ENCODE measurements at regions of chr6 and their contacts with region 1.

Region 1: DNA sequence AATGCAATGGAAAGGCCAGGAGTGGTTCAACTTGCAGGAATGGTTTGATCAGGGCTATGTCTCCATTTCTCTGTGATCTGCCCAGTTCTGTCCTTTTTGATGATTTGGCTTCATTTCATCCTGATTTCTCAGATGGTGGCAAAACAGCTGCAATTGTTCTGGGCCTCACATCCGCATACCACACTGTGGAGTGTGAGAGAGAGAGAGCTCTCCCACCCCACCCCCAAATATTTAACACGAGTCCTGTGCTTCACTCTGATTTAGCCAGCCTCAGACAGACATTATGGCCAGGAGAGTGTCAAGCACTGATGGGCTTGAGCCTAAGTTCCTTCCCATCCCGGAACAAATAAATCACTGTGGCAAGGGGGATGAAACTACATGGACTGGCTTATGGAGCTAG is 284.6 kb downstream of the CDC5L start:
- DNase-seq: no peak
- ATAC-seq: no peak
- H3K4me3 ChIP-seq: no peak overlapping the region
- H3K4me3 Mint-ChIP-seq: no peak overlapping the region
- H3K27ac ChIP-seq: no peak overlapping the region
- H3K27ac Mint-ChIP-seq: no peak overlapping the region
- H3K4me1 ChIP-seq: no peaks in the 10 kb centered on the region
- H3K4me1 Mint-ChIP-seq: peaks cover 0 to 6% (median 0%) of the 10 kb centered on the region in 3 donors
- H3K27me3 ChIP-seq: peaks cover 0 to 12% of the 10 kb centered on the region in 2 experiments
- H3K27me3 Mint-ChIP-seq: peaks cover 4 to 13% of the 10 kb centered on the region in 2 donors

Region 2: DNA sequence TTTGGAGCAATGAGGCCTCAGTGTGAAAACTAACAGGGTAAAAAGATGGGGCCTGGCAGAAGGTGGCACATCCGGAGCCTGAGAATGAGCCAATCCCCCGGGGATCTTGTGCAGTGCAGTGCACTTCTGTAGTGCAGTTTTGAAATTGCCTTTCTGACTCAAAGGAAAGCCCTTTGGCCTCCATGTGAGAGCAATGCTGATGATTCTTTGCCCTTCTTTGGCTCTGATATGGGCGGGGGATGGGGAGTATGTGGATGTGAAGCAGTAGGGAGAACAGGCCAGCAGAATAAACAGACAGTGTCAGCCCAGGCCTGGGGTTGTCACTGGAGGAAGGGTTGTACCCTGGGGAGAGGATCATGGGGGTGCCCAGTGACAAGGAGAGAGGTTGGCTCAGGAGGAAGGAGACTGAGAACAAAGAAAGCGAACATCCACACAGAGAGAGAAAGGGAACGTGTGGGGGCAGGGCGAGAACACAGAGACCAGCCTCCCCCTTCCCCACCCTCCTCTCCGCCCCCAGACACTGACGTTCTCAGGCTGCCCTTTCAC is 66.6 kb after region 1 on chr6:
- CTCF ChIA-PET with region 1: no interaction called
- POLR2A ChIA-PET with region 1: interaction called in 1 of 2 experiments, 10 read pairs
- DNase-seq: no peak
- ATAC-seq: no peak
- H3K4me3 ChIP-seq: no peak overlapping the region
- H3K4me3 Mint-ChIP-seq: no peak overlapping the region
- H3K27ac ChIP-seq: no peak overlapping the region
- H3K27ac Mint-ChIP-seq: no peak overlapping the region
- H3K4me1 ChIP-seq: no peaks in the 10 kb centered on the region
- H3K4me1 Mint-ChIP-seq: peaks cover 0 to 4% (median 0%) of the 10 kb centered on the region in 3 donors
- H3K27me3 ChIP-seq: peaks cover 0 to 4% of the 10 kb centered on the region in 2 experiments
- H3K27me3 Mint-ChIP-seq: no peaks in the 10 kb centered on the region

Region 3: GRCh38 chr6:46539866-46540265 is 1867.8 kb after region 1 on chr6:
- CTCF ChIA-PET with region 1: no interaction called
- POLR2A ChIA-PET with region 1: no interaction called
- DNase-seq: no peak
- ATAC-seq: no peak
- H3K4me3 ChIP-seq: no peak overlapping the region
- H3K4me3 Mint-ChIP-seq: no peak overlapping the region
- H3K27ac ChIP-seq: no peak overlapping the region
- H3K27ac Mint-ChIP-seq: no peak overlapping the region
- H3K4me1 ChIP-seq: no peaks in the 10 kb centered on the region
- H3K4me1 Mint-ChIP-seq: no peaks in the 10 kb centered on the region
- H3K27me3 ChIP-seq: peaks cover 0 to 13% of the 10 kb centered on the region in 2 experiments
- H3K27me3 Mint-ChIP-seq: peaks cover 21 to 34% of the 10 kb centered on the region in 2 donors

Measured in T-cell (primary cell).